BJ (cell line): ENCODE measurements at regions of chr3 and their contacts with region 1.

Region 1: DNA sequence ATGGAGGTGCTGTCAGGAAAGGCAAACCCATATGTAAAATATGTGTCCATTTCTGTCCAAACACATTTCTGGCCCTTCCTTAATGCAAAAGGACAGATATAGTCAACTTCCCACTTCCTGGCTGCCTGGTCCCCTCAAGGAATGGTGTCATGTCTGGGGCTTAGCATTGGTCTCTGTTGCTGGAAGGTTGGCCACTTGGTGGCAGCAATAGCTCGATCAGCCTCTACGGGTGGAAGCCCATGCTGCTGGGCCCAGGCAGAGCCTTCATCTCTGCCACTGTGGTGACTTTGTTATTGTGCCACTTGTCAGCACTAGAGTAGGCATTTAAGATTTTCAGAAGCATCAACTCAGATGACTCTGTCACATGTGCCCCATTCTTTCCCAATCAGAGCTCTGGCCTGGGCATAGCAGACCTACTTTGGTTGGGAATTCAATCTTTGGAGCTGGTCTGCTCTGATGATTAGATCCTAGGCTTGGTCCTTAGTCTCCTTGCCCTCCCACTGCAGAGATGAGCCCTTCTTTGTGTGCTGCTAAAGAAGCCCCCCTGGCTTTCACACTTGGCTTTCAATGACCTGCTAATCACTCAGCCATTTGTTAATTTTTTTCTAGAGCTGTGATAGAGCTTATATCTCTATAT is 51.0 kb upstream of the SPSB4 start:
- DNase-seq: no peak
- H3K4me3 ChIP-seq: no peak overlapping the region
- H3K27me3 ChIP-seq: no peaks in the 10 kb centered on the region
- CTCF ChIP-seq: peak; percentile 72

Region 2: GRCh38 chr3:141105828-141106628 is 105.9 kb after region 1 on chr3:
- CTCF ChIA-PET with region 1: interaction called, 23 read pairs
- POLR2A ChIA-PET with region 1: no interaction called
- DNase-seq: peak; percentile 31
- H3K4me3 ChIP-seq: no peak overlapping the region
- H3K27me3 ChIP-seq: no peaks in the 10 kb centered on the region; the same call in 1 of the 2 replicates
- CTCF ChIP-seq: peak; percentile 73